ENCODE measurements at regions of chr9 and their contacts with region 1.

Region 1: GRCh38 chr9:36833954-36834353 is 200.1 kb downstream of the PAX5 start:
- DNase-seq: no peak
- H3K4me3 ChIP-seq: no peak overlapping the region
- H3K27ac ChIP-seq: no peak overlapping the region
- H3K4me1 ChIP-seq: no peaks in the 10 kb centered on the region
- H3K27me3 ChIP-seq: no peaks in the 10 kb centered on the region
- CTCF ChIP-seq: no peak
- POLR2A ChIP-seq: no peak

Region 2: GRCh38 chr9:37040508-37041127 is 206.7 kb after region 1 on chr9:
- intact Hi-C with region 1: loop called (anchors 10 kb)
- DNase-seq: no peak
- H3K4me3 ChIP-seq: no peak overlapping the region
- H3K27ac ChIP-seq: no peak overlapping the region
- H3K4me1 ChIP-seq: peaks cover 24% of the 10 kb centered on the region
- H3K27me3 ChIP-seq: peaks cover 11% of the 10 kb centered on the region
- CTCF ChIP-seq: no peak
- POLR2A ChIP-seq: no peak

Measured in vagina (tissue), 2 donors.